Caco-2 (cell line): ENCODE measurements at regions of chr15 and their contacts with region 1.

Region 1: GRCh38 chr15:50145451-50145872 is 26.4 kb upstream of the ATP8B4 start:
- DNase-seq: peak in 1 of 2 experiments; percentile 62
- H3K4me3 ChIP-seq: no peak overlapping the region
- H3K4me3 Mint-ChIP-seq: no peak overlapping the region
- H3K27ac Mint-ChIP-seq: no peak overlapping the region
- H3K4me1 ChIP-seq: peaks cover 13% of the 10 kb centered on the region; the same call in 1 of the 2 replicates
- H3K4me1 Mint-ChIP-seq: peaks cover 8% of the 10 kb centered on the region
- H3K27me3 ChIP-seq: no peaks in the 10 kb centered on the region
- H3K27me3 Mint-ChIP-seq: no peaks in the 10 kb centered on the region
- CTCF ChIP-seq: peak; percentile 13 to 50

Region 2: GRCh38 chr15:49145651-49146609 is 999.5 kb before region 1 on chr15:
- CTCF ChIA-PET with region 1: no interaction called
- POLR2A ChIA-PET with region 1: no interaction called
- intact Hi-C with region 1: loop called (anchors 10 kb)
- DNase-seq: peak; percentile 37 to 54
- H3K4me3 ChIP-seq: no peak overlapping the region
- H3K4me3 Mint-ChIP-seq: no peak overlapping the region
- H3K27ac Mint-ChIP-seq: no peak overlapping the region
- H3K4me1 ChIP-seq: no peaks in the 10 kb centered on the region
- H3K4me1 Mint-ChIP-seq: peaks cover 8% of the 10 kb centered on the region
- H3K27me3 ChIP-seq: no peaks in the 10 kb centered on the region
- H3K27me3 Mint-ChIP-seq: no peaks in the 10 kb centered on the region
- CTCF ChIP-seq: peak; percentile 68 to 71

Region 3: GRCh38 chr15:49876401-49877038 is 268.9 kb before region 1 on chr15:
- CTCF ChIA-PET with region 1: interaction called, 9 read pairs
- POLR2A ChIA-PET with region 1: no interaction called
- intact Hi-C with region 1: loop called (anchors 1 kb)
- DNase-seq: peak in 1 of 2 experiments; percentile 32
- H3K4me3 ChIP-seq: no peak overlapping the region
- H3K4me3 Mint-ChIP-seq: no peak overlapping the region
- H3K27ac Mint-ChIP-seq: no peak overlapping the region
- H3K4me1 ChIP-seq: no peaks in the 10 kb centered on the region
- H3K4me1 Mint-ChIP-seq: peaks cover 7% of the 10 kb centered on the region
- H3K27me3 ChIP-seq: no peaks in the 10 kb centered on the region
- H3K27me3 Mint-ChIP-seq: peaks cover 6% of the 10 kb centered on the region
- CTCF ChIP-seq: peak; percentile 36 to 40

Region 4: DNA sequence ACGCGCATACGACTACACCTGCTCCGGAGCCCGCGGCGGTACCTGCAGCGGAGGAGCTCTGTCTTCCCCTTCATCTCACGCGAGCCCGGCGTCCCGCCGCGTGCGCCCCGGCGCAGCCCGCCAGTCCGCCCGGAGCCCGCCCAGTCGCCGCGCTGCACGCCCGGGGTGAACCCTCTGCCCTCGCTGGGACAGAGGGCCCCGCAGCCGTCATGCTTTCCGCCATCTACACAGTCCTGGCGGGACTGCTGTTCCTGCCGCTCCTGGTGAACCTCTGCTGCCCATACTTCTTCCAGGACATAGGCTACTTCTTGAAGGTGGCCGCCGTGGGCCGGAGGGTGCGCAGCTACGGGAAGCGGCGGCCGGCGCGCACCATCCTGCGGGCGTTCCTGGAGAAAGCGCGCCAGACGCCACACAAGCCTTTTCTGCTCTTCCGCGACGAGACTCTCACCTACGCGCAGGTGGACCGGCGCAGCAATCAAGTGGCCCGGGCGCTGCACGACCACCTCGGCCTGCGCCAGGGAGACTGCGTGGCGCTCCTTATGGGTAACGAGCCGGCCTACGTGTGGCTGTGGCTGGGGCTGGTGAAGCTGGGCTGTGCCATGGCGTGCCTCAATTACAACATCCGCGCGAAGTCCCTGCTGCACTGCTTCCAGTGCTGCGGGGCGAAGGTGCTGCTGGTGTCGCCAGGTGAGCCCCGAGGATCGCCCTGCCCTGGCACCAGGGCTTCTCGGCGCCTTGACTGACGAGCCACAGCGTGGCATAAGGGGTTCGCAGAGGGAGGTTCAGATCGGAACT is 37.0 kb after region 1 on chr15:
- CTCF ChIA-PET with region 1: interaction called, 6 read pairs
- POLR2A ChIA-PET with region 1: no interaction called
- intact Hi-C with region 1: loop called (anchors 1 kb)
- DNase-seq: peak; percentile 73 to 84
- H3K4me3 ChIP-seq: peak overlapping the region; percentile 83
- H3K4me3 Mint-ChIP-seq: peak overlapping the region; percentile 88
- H3K27ac Mint-ChIP-seq: peak overlapping the region; percentile 51
- H3K4me1 ChIP-seq: peaks cover 5% of the 10 kb centered on the region; the same call in 1 of the 2 replicates
- H3K4me1 Mint-ChIP-seq: peaks cover 11% of the 10 kb centered on the region
- H3K27me3 ChIP-seq: no peaks in the 10 kb centered on the region
- H3K27me3 Mint-ChIP-seq: no peaks in the 10 kb centered on the region
- CTCF ChIP-seq: no peak

Region 5: DNA sequence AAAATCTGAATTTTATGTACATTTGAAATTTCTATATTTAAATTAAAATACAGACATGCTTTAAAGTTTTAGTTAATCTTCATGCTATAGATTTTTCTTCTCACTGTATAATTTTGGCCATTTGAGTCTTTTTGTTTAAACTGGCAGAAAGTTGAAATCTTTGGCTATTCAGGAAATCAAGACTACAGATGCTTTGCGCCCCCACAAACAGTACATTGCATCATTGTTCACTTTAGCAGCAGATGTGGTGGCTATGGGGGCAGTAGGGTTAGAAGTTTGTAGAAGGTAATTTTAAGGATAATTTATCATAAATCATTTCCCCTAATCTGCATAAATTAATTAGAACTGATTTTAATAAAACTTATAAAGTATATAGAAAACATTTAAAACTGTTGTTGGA is 599.1 kb after region 1 on chr15:
- CTCF ChIA-PET with region 1: no interaction called
- POLR2A ChIA-PET with region 1: no interaction called
- intact Hi-C with region 1: no loop called
- DNase-seq: no peak
- H3K4me3 ChIP-seq: no peak overlapping the region
- H3K4me3 Mint-ChIP-seq: no peak overlapping the region
- H3K27ac Mint-ChIP-seq: no peak overlapping the region
- H3K4me1 ChIP-seq: no peaks in the 10 kb centered on the region; the same call in 1 of the 2 replicates
- H3K4me1 Mint-ChIP-seq: no peaks in the 10 kb centered on the region
- H3K27me3 ChIP-seq: no peaks in the 10 kb centered on the region
- H3K27me3 Mint-ChIP-seq: no peaks in the 10 kb centered on the region
- CTCF ChIP-seq: no peak

Region 6: GRCh38 chr15:50908210-50909009 is 762.9 kb after region 1 on chr15 and contains the start of gene AP4E1:
- CTCF ChIA-PET with region 1: no interaction called
- POLR2A ChIA-PET with region 1: no interaction called
- intact Hi-C with region 1: loop called (anchors 1 kb)
- DNase-seq: peak; percentile 88 to 93
- H3K4me3 ChIP-seq: peak within 1 kb of the TSS; percentile 73
- H3K4me3 Mint-ChIP-seq: peak within 1 kb of the TSS; percentile 83
- H3K27ac Mint-ChIP-seq: peak within 1 kb of the TSS; percentile 81
- H3K4me1 ChIP-seq: peaks cover 33% of the 10 kb centered on the region
- H3K4me1 Mint-ChIP-seq: peaks cover 6% of the 10 kb centered on the region
- H3K27me3 ChIP-seq: no peaks in the 10 kb centered on the region
- H3K27me3 Mint-ChIP-seq: no peaks in the 10 kb centered on the region
- CTCF ChIP-seq: peak; percentile 89 to 94
- total RNA-seq, gene AP4E1: 15.9 and 17.9 TPM in 2 replicates